ENCODE measurements at regions of chr4 and their contacts with region 1.

Region 1: DNA sequence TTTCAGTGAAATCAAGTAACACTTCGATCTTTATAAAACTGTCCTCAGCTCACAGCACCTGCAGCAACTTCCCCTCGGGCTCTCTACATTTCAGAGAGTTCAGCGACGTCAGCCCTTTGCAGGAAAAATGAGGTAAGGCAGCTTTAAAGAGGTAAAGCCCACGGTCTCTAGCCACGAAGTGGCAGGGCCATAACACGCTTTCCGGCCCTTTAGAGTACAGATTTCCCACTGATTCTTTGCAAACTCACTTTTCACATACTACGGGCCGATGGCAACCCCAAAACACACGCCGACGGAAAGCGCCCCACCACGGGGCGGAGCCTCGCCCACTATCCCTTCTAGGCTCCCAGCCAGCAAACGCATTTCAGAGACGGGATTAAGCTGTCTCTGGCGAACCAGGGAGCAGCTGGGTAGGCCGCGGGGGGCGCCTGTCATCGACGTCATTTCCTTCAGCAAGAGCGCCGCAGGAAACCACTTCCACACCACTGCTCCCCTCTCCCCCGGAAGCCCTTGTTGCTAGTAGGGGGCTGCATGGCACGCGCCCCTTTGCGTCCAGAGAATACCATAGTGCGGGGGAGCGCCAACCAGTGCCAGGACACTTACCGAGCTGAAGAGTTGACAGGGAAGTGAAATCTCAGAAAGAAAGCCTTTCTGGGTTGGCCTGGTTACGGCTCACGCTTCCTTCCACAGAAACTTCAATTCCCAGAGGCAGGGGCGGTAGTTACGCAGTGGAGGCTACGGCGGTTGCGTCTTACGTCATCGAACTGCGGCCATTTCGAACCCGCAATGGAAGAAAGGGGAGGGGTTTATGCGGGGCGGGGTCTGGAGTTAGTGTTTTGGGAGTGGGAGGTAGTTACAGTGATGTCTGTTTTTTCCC is at the start of gene TRMT10A:
- DNase-seq: peak; percentile 97 to 99 (median 98)
- H3K4me3 ChIP-seq: peak within 1 kb of the TSS; percentile 72
- H3K27ac ChIP-seq: peak within 1 kb of the TSS; percentile 94 to 97
- H3K4me1 ChIP-seq: peaks cover 2% of the 10 kb centered on the region
- H3K27me3 ChIP-seq: no peaks in the 10 kb centered on the region
- CTCF ChIP-seq: peak; percentile 17 to 47 (median 26)
- EP300 ChIP-seq: peak; percentile 20
- POLR2A ChIP-seq: peak; percentile 55
- total RNA-seq, gene TRMT10A: 2.5 to 5.3 (median 3.1) TPM

Region 2: GRCh38 chr4:99383833-99384392 is 179.6 kb before region 1 on chr4:
- intact Hi-C with region 1: no loop called
- DNase-seq: peak; percentile 59 to 82 (median 64)
- H3K4me3 ChIP-seq: no peak overlapping the region
- H3K27ac ChIP-seq: peak overlapping the region; percentile 70 to 88
- H3K4me1 ChIP-seq: peaks cover 9% of the 10 kb centered on the region
- H3K27me3 ChIP-seq: no peaks in the 10 kb centered on the region
- CTCF ChIP-seq: no peak
- EP300 ChIP-seq: peak; percentile 19
- POLR2A ChIP-seq: no peak

Region 3: GRCh38 chr4:99462875-99463464 is 100.6 kb before region 1 on chr4:
- intact Hi-C with region 1: no loop called
- DNase-seq: peak; percentile 24 to 64 (median 38)
- H3K4me3 ChIP-seq: no peak overlapping the region
- H3K27ac ChIP-seq: no peak overlapping the region
- H3K4me1 ChIP-seq: no peaks in the 10 kb centered on the region
- H3K27me3 ChIP-seq: no peaks in the 10 kb centered on the region
- CTCF ChIP-seq: peak; percentile 62 to 77 (median 74)
- EP300 ChIP-seq: no peak
- POLR2A ChIP-seq: no peak

Region 4: GRCh38 chr4:99642725-99643489 is 79.4 kb after region 1 on chr4:
- intact Hi-C with region 1: loop called in 1 of 4 experiments (anchors 10 kb)
- DNase-seq: peak; percentile 54 to 84 (median 70)
- H3K4me3 ChIP-seq: no peak overlapping the region
- H3K27ac ChIP-seq: peak overlapping the region; percentile 24 to 34
- H3K4me1 ChIP-seq: peaks cover 15% of the 10 kb centered on the region
- H3K27me3 ChIP-seq: no peaks in the 10 kb centered on the region
- CTCF ChIP-seq: no peak
- EP300 ChIP-seq: no peak
- POLR2A ChIP-seq: no peak

Region 5: GRCh38 chr4:99655308-99656081 is 91.9 kb after region 1 on chr4:
- intact Hi-C with region 1: no loop called
- DNase-seq: peak; percentile 59 to 85 (median 78)
- H3K4me3 ChIP-seq: no peak overlapping the region
- H3K27ac ChIP-seq: peak overlapping the region in 1 of 2 donors; percentile 14
- H3K4me1 ChIP-seq: peaks cover 10% of the 10 kb centered on the region
- H3K27me3 ChIP-seq: no peaks in the 10 kb centered on the region
- CTCF ChIP-seq: no peak
- EP300 ChIP-seq: no peak
- POLR2A ChIP-seq: no peak

Region 6: GRCh38 chr4:99783940-99784339 is 220.4 kb after region 1 on chr4:
- intact Hi-C with region 1: no loop called
- DNase-seq: no peak
- H3K4me3 ChIP-seq: no peak overlapping the region
- H3K27ac ChIP-seq: no peak overlapping the region
- H3K4me1 ChIP-seq: no peaks in the 10 kb centered on the region
- H3K27me3 ChIP-seq: no peaks in the 10 kb centered on the region
- CTCF ChIP-seq: no peak
- EP300 ChIP-seq: no peak
- POLR2A ChIP-seq: no peak

Region 7: GRCh38 chr4:99885063-99885664 is 321.6 kb after region 1 on chr4:
- intact Hi-C with region 1: loop called (anchors 5 to 10 kb)
- DNase-seq: no peak
- H3K4me3 ChIP-seq: no peak overlapping the region
- H3K27ac ChIP-seq: no peak overlapping the region
- H3K4me1 ChIP-seq: no peaks in the 10 kb centered on the region
- H3K27me3 ChIP-seq: no peaks in the 10 kb centered on the region
- CTCF ChIP-seq: peak; percentile 53 to 60 (median 56)
- EP300 ChIP-seq: no peak
- POLR2A ChIP-seq: no peak

Region 8: DNA sequence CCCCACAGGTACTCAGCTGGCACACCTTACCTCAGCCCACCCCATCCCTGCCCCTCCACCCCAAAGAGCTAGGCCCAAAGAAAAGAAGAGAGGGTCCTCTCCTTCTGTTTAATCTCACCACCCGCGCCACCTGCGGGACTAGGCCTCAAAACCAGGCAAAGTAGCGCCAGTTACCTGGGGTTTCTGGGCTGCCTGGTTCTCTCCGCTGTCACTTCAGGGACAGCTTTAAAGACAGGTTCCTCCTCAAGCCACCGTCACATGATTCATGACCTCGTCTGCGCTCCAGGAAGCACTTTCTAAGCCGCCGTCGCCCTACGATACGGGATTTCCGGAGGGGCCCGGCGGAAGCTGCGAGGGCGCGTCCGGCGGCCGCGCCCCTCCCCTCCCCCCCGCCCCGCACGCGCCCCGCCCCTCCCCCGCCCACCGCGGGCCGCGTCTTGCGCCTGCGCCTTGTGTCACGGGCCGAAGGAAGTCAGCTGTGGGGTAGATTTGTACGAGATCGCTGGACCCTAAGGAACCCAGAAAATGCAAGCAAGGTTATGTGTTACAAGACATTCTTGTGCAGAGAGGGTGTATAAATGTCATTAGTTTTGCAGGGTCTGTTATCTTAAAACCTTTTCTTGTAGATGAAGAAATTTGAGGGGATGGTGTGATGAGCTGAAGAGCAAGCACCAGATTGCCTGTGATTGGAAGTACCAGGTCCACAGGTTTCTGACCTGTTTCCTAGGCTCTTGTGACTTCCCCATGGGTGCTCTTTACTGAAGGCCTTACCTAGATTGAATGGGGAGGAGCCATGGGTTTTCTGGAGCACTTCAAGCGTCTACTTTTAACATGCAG is 330.8 kb after region 1 on chr4 and contains the start of gene LAMTOR3:
- intact Hi-C with region 1: loop called (anchors 5 to 10 kb)
- DNase-seq: peak; percentile 87 to 92 (median 89)
- H3K4me3 ChIP-seq: peak within 1 kb of the TSS; percentile 71
- H3K27ac ChIP-seq: peak within 1 kb of the TSS in 1 of 2 donors; percentile 78
- H3K4me1 ChIP-seq: peaks cover 8% of the 10 kb centered on the region
- H3K27me3 ChIP-seq: no peaks in the 10 kb centered on the region
- CTCF ChIP-seq: no peak
- EP300 ChIP-seq: no peak
- POLR2A ChIP-seq: peak; percentile 37
- total RNA-seq, gene LAMTOR3: 36.5 to 52.4 (median 43.7) TPM

Region 9: DNA sequence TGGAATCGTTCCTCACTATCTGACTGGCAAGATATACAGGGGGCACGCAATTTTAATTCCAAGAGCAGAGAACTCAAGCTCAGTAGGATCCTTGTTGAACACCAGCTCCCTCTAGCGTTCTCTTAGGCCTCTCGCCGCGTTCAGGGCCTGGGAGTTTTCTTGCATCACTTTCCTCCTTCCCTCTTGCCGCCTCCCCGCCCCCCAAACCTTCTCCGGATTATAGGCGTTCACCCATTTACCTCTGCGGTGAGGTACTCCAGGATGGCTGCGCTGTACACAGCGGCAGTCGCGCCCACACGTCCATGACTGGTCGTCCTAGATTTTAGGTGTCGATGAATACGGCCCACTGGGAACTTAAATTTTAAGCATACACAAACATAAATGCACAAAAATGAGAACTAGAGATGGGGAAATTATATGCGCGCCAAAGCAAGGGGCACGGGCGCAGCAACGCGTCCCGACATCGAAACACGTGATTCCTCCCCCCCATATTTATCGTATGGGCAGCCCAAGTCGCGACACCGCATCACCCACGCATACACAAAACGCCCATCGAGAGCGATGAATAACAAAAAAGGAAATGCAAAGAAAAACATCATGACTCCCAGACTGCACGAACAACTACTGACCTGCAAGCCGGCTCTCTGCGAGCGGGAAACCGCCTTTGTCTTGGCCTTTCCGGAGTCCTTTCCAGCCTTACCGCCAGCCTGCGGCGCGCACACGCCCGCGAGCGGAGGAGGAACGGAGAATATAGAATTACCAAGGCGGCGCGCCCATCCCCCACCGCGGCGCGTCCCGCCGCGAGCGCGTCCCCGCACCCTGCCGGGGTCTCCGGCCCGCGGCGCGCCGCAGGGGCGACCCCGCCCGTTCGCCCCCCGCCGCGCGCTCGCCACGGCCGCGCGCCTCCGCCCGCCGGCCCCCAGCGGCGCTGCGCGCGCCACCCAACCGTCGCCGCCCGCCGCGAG is 385.8 kb after region 1 on chr4:
- intact Hi-C with region 1: loop called in 2 of 4 experiments (anchors 5 kb)
- DNase-seq: peak; percentile 82 to 92 (median 87)
- H3K4me3 ChIP-seq: peak overlapping the region; percentile 80
- H3K27ac ChIP-seq: peak overlapping the region; percentile 80 to 89
- H3K4me1 ChIP-seq: peaks cover 3% of the 10 kb centered on the region
- H3K27me3 ChIP-seq: no peaks in the 10 kb centered on the region
- CTCF ChIP-seq: peak; percentile 75 to 81 (median 81)
- EP300 ChIP-seq: no peak
- POLR2A ChIP-seq: peak; percentile 9